B cell (primary cell): ENCODE measurements at regions of chr14 and their contacts with region 1.

Region 1: GRCh38 chr14:100317912-100318808 is 5.0 kb upstream of the SLC25A47 start:
- DNase-seq: peak; percentile 82
- ATAC-seq: peak; percentile 97
- H3K4me3 ChIP-seq: peak overlapping the region; percentile 48 to 70 (median 56)
- H3K4me3 Mint-ChIP-seq: peak overlapping the region; percentile 78
- H3K27ac ChIP-seq: peak overlapping the region; percentile 44 to 56
- H3K27ac Mint-ChIP-seq: peak overlapping the region; percentile 89
- H3K4me1 ChIP-seq: peaks cover 6 to 12% of the 10 kb centered on the region in 2 donors
- H3K4me1 Mint-ChIP-seq: peaks cover 5% of the 10 kb centered on the region
- H3K27me3 ChIP-seq: no peaks in the 10 kb centered on the region
- H3K27me3 Mint-ChIP-seq: no peaks in the 10 kb centered on the region
- CTCF ChIP-seq: peak; percentile 95

Region 2: DNA sequence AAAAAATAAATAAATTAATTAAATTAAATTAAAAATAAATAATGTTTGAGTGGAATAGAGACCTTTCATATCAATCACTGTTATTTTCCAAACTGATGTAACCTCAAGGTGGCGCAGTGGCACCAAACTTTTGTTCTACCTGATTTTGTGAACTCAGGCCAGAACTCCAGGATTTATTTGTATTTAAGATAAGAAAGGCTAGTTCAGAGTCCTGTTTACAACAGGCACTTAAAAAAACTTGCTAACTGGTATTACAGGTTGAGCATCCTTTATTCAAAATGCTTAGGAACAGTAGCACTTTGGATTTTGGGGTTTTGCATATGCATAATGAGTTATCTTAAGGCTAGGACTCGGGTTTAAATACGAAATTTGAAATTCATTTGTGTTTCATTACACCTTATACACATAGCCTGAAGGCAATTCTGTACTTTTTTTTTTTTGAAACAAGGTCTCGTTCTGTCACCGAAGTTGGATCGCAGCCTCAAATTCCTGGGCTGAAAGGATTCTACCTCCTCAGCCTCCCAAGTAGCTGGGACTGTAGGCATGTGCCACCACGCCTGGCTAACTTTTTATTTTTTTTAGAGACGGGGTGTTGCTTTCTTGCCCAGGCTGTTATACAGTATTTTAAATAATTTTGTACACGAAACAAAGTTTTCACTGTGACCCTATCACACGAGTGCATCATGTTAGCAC is 46.8 kb before region 1 on chr14:
- CTCF ChIA-PET with region 1: interaction called, 4 read pairs
- POLR2A ChIA-PET with region 1: no interaction called
- intact Hi-C with region 1: loop called (anchors 5 kb)
- DNase-seq: peak; percentile 48
- ATAC-seq: no peak
- H3K4me3 ChIP-seq: no peak overlapping the region
- H3K4me3 Mint-ChIP-seq: no peak overlapping the region
- H3K27ac ChIP-seq: no peak overlapping the region
- H3K27ac Mint-ChIP-seq: no peak overlapping the region
- H3K4me1 ChIP-seq: no peaks in the 10 kb centered on the region
- H3K4me1 Mint-ChIP-seq: peaks cover 33% of the 10 kb centered on the region
- H3K27me3 ChIP-seq: no peaks in the 10 kb centered on the region
- H3K27me3 Mint-ChIP-seq: no peaks in the 10 kb centered on the region
- CTCF ChIP-seq: peak; percentile 62

Region 3: DNA sequence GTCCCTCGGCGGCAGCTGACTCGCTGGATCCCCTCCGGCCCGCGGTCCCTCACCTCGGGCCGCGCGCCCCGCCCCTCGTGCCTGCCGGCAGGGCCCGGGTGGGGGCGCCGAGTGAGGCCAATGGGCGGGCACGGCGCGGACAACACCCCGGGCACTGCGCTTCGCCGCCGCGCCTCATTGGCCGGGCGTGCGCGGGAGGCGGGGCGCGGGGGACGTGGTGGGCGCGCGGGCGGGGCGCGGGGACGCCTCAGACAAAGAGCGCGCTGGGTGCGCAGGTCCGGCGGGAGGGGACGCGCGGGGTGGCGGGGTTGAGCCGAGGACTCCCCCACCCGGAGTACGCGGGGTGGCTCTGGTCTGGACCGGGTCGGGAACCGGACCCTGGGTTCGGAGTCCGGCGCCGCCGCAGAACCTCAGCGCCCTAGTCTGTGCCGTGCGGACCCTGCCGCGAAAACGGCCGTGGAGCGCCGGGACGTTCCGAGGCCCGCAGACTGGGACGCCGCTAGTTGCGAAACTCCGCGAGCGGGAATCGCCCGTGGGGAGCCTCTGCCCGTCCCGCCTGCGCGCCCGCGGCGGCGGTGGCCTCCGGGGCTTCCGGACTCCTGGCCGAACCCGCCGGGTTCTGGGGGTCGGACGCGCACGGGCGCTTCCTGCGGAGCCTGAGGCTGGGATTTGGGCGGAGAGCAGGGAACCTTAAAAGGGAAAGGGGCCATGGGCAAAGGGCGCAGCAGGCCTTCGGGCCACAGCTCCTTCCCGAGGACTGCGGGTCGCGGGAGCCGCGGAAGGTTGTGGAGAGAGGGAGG is 11.5 kb before region 1 on chr14 and contains the start of gene SLC25A29:
- CTCF ChIA-PET with region 1: interaction called, 6 read pairs
- POLR2A ChIA-PET with region 1: interaction called, 3 read pairs
- intact Hi-C with region 1: loop called (anchors 1 kb)
- DNase-seq: peak; percentile 84
- ATAC-seq: peak; percentile 94
- H3K4me3 ChIP-seq: peak within 1 kb of the TSS in 4 of 5 experiments; percentile 70 to 81 (median 80)
- H3K4me3 Mint-ChIP-seq: peak within 1 kb of the TSS; percentile 94
- H3K27ac ChIP-seq: peak within 1 kb of the TSS in 1 of 2 donors; percentile 46
- H3K27ac Mint-ChIP-seq: peak within 1 kb of the TSS; percentile 83
- H3K4me1 ChIP-seq: peaks cover 20 to 32% of the 10 kb centered on the region in 2 donors
- H3K4me1 Mint-ChIP-seq: peaks cover 21% of the 10 kb centered on the region
- H3K27me3 ChIP-seq: peaks cover 0 to 3% (median 0%) of the 10 kb centered on the region in 4 experiments
- H3K27me3 Mint-ChIP-seq: no peaks in the 10 kb centered on the region
- CTCF ChIP-seq: no peak
- total RNA-seq, gene SLC25A29: 99.9 and 108 TPM in 2 replicates

Region 4: DNA sequence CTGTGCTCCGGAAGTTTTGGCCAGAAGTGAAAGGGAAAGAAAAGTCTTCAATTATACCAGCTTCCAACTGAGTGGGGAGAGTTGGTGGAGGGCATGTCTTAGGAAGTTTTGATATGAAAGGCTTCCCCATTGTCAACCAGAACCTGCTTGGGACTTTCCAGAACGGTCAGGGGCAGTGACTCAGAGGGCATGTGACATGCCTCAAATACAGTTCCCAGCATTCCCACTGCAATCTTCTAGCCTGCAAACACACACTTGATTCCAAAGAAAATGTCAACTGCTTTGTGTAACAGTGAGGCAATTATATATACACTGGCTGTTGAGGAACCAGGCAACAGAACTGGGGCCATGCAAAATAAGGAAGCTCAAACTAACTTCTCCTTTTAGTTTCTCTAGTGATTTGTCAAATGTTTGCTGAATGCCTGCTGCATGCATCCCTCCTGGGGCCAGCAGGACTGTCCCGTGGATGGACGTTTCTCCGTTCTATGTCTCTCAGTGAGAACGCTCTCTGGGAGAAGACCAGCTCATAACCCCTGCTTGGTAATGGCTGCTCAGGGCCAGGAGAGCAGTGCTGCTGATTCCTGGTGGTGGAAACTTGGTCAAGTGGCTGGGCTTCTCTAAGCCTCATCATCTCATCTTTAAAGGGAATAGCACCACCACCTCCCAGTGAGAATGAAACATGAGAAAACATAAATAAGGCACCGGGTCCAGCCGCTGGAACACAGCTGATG is 23.3 kb after region 1 on chr14:
- CTCF ChIA-PET with region 1: interaction called, 3 read pairs
- POLR2A ChIA-PET with region 1: interaction called, 3 read pairs
- intact Hi-C with region 1: loop called (anchors 1 kb)
- DNase-seq: peak; percentile 69
- ATAC-seq: peak; percentile 95
- H3K4me3 ChIP-seq: peak overlapping the region in 1 of 5 experiments; percentile 19
- H3K4me3 Mint-ChIP-seq: peak overlapping the region; percentile 62
- H3K27ac ChIP-seq: peak overlapping the region; percentile 75 to 78
- H3K27ac Mint-ChIP-seq: peak overlapping the region; percentile 93
- H3K4me1 ChIP-seq: peaks cover 15 to 22% of the 10 kb centered on the region in 2 donors
- H3K4me1 Mint-ChIP-seq: peaks cover 24% of the 10 kb centered on the region
- H3K27me3 ChIP-seq: no peaks in the 10 kb centered on the region
- H3K27me3 Mint-ChIP-seq: no peaks in the 10 kb centered on the region
- CTCF ChIP-seq: no peak